PC-3 (cell line): ENCODE measurements at regions of chr4 and their contacts with region 1.

Region 1: GRCh38 chr4:81136161-81136905 is 78.7 kb downstream of the PRKG2 start:
- DNase-seq: peak; percentile 70
- ATAC-seq: peak; percentile 87
- H3K4me3 ChIP-seq: 0 out of 2 replicates have a peak overlapping the region, but pooled peaks have one; percentile 16
- H3K27ac ChIP-seq: peak overlapping the region; percentile 94
- H3K4me1 ChIP-seq: peaks cover 24% of the 10 kb centered on the region
- H3K27me3 ChIP-seq: no peaks in the 10 kb centered on the region
- CTCF ChIP-seq: no peak

Region 2: DNA sequence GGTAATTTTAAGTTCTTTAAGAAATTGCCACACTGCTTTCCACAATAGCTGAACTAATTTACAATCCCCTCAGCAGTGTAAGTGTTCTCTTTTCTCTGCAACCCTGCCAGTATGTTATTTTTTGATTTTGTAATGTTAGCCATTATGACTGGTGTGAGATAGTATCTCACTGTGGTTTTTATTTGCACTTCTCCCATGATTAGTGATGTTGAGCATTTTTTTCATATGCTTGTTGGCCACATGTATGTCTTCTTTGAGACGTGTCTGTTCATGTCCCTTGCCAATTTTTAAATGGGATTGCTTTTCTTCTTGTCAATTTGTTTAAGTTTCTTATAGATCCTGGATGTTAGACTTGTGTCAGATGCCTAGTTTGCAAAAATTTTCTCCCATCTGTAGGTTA is 19.8 kb before region 1 on chr4:
- CTCF ChIA-PET with region 1: no interaction called
- POLR2A ChIA-PET with region 1: no interaction called
- intact Hi-C with region 1: loop called (anchors 1 kb)
- DNase-seq: no peak
- ATAC-seq: no peak
- H3K4me3 ChIP-seq: no peak overlapping the region
- H3K27ac ChIP-seq: no peak overlapping the region
- H3K4me1 ChIP-seq: peaks cover 16% of the 10 kb centered on the region
- H3K27me3 ChIP-seq: no peaks in the 10 kb centered on the region
- CTCF ChIP-seq: no peak

Region 3: GRCh38 chr4:81164623-81165416 is 28.5 kb after region 1 on chr4:
- CTCF ChIA-PET with region 1: interaction called, 3 read pairs
- POLR2A ChIA-PET with region 1: no interaction called
- intact Hi-C with region 1: loop called (anchors 1 kb)
- DNase-seq: peak; percentile 94
- ATAC-seq: peak; percentile 93
- H3K4me3 ChIP-seq: peak overlapping the region; percentile 56
- H3K27ac ChIP-seq: peak overlapping the region; percentile 78
- H3K4me1 ChIP-seq: peaks cover 33% of the 10 kb centered on the region
- H3K27me3 ChIP-seq: no peaks in the 10 kb centered on the region
- CTCF ChIP-seq: no peak